PC-3 (cell line): ENCODE measurements at regions of chr5 and their contacts with region 1.

Region 1: GRCh38 chr5:76805850-76806505 is 12.9 kb upstream of the F2RL1 start:
- DNase-seq: peak; percentile 90
- ATAC-seq: peak; percentile 75
- H3K4me3 ChIP-seq: no peak overlapping the region
- H3K27ac ChIP-seq: peak overlapping the region; percentile 100
- H3K4me1 ChIP-seq: peaks cover 59% of the 10 kb centered on the region
- H3K27me3 ChIP-seq: no peaks in the 10 kb centered on the region
- CTCF ChIP-seq: no peak

Region 2: GRCh38 chr5:76785487-76785886 is 20.5 kb before region 1 on chr5:
- CTCF ChIA-PET with region 1: no interaction called
- POLR2A ChIA-PET with region 1: interaction called, 14 read pairs
- intact Hi-C with region 1: loop called (anchors 2 kb)
- DNase-seq: peak; percentile 76
- ATAC-seq: peak; percentile 51
- H3K4me3 ChIP-seq: no peak overlapping the region
- H3K27ac ChIP-seq: peak overlapping the region; percentile 88
- H3K4me1 ChIP-seq: peaks cover 39% of the 10 kb centered on the region
- H3K27me3 ChIP-seq: no peaks in the 10 kb centered on the region
- CTCF ChIP-seq: no peak

Region 3: GRCh38 chr5:76908166-76908565 is 102.2 kb after region 1 on chr5:
- CTCF ChIA-PET with region 1: no interaction called
- POLR2A ChIA-PET with region 1: no interaction called
- intact Hi-C with region 1: no loop called
- DNase-seq: no peak
- ATAC-seq: no peak
- H3K4me3 ChIP-seq: no peak overlapping the region
- H3K27ac ChIP-seq: no peak overlapping the region
- H3K4me1 ChIP-seq: no peaks in the 10 kb centered on the region
- H3K27me3 ChIP-seq: no peaks in the 10 kb centered on the region
- CTCF ChIP-seq: no peak